ENCODE measurements at regions of chr10 and their contacts with region 1.

Region 1: GRCh38 chr10:69179743-69180524 is at the start of gene SUPV3L1:
- DNase-seq: peak; percentile 94 to 96
- ATAC-seq: peak; percentile 97 to 99
- H3K4me3 ChIP-seq: peak within 1 kb of the TSS; percentile 77 to 100 (median 95)
- H3K27ac ChIP-seq: peak within 1 kb of the TSS; percentile 87 to 98 (median 92)
- H3K4me1 ChIP-seq: peaks cover 27 to 33% of the 10 kb centered on the region in 2 donors
- H3K27me3 ChIP-seq: no peaks in the 10 kb centered on the region
- CTCF ChIP-seq: peak in 1 of 5 experiments; percentile 33
- POLR2A ChIP-seq: peak; percentile 86
- total RNA-seq, gene SUPV3L1: 29.7 to 38.8 (median 32.2) TPM

Region 2: GRCh38 chr10:68526626-68527307 is 653.2 kb before region 1 on chr10:
- in situ Hi-C with region 1: no loop called
- intact Hi-C with region 1: loop called (anchors 5 kb)
- DNase-seq: no peak
- ATAC-seq: peak; percentile 61 to 74
- H3K4me3 ChIP-seq: peak overlapping the region; percentile 83 to 100 (median 93)
- H3K27ac ChIP-seq: peak overlapping the region; percentile 88 to 100 (median 99)
- H3K4me1 ChIP-seq: peaks cover 4 to 8% of the 10 kb centered on the region in 2 donors
- H3K27me3 ChIP-seq: no peaks in the 10 kb centered on the region
- CTCF ChIP-seq: no peak
- POLR2A ChIP-seq: no peak

Region 3: DNA sequence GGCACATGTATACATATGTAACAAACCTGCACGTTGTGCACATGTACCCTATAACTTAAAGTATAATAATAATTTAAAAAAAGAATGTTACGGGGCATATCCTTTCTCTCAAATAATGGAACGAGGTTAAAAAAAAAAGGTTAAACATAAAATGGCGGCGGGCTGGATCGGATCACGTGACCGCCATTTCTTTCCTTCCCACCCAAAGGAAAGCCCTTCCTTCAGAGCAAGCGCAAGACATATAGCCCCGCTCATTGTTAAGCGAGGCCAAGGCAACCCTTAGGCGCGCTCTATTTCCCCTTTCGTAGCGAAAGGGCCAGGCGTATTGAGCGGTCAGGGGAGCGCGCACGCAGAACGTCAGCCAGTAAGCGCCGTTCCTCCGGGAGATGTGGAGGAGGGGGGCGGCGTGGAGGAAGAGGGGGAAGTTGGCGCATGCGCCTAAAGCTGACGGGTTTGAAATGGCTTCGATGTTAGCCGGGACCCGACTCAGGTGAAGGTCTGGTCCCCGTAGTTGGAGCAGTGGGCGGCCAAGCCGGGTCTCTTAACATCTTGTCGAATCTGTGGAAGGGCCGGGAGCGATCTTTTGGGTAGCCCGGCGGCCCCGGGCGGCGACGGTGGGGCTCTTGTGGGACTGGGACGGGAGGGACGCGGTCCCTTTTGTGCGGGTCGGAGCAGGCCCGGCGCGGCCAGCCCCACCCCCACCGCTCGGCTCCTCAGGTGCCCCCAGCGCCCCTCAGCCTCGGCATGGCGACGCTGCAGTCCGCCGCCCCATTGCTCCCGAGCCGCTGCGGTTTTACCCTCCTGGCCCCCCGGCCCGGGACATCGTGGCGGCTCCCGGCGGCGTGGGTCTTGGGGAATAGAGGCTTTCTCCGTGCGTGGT is 458.9 kb before region 1 on chr10 and contains the start of gene CCAR1:
- in situ Hi-C with region 1: no loop called
- intact Hi-C with region 1: loop called (anchors 1 kb)
- DNase-seq: peak; percentile 93 to 95
- ATAC-seq: peak; percentile 97 to 98
- H3K4me3 ChIP-seq: peak within 1 kb of the TSS; percentile 88 to 96 (median 90)
- H3K27ac ChIP-seq: peak within 1 kb of the TSS; percentile 94 to 99 (median 96)
- H3K4me1 ChIP-seq: peaks cover 7 to 9% of the 10 kb centered on the region in 2 donors
- H3K27me3 ChIP-seq: no peaks in the 10 kb centered on the region
- CTCF ChIP-seq: no peak
- POLR2A ChIP-seq: peak; percentile 67 to 73
- total RNA-seq, gene CCAR1: 17.8 to 71.3 (median 37.7) TPM

Region 4: GRCh38 chr10:68752711-68753350 is 427.1 kb before region 1 on chr10:
- in situ Hi-C with region 1: loop called in 1 of 4 experiments (anchors 25 kb)
- intact Hi-C with region 1: no loop called
- DNase-seq: no peak
- ATAC-seq: no peak
- H3K4me3 ChIP-seq: no peak overlapping the region
- H3K27ac ChIP-seq: no peak overlapping the region
- H3K4me1 ChIP-seq: no peaks in the 10 kb centered on the region
- H3K27me3 ChIP-seq: no peaks in the 10 kb centered on the region
- CTCF ChIP-seq: no peak
- POLR2A ChIP-seq: no peak

Region 5: GRCh38 chr10:68988530-68989316 is 191.2 kb before region 1 on chr10 and contains the start of gene KIFBP:
- in situ Hi-C with region 1: loop called in 1 of 4 experiments (anchors 10 kb)
- intact Hi-C with region 1: no loop called
- DNase-seq: peak; percentile 88 to 92
- ATAC-seq: peak; percentile 98
- H3K4me3 ChIP-seq: peak within 1 kb of the TSS; percentile 90 to 92 (median 90)
- H3K27ac ChIP-seq: peak within 1 kb of the TSS; percentile 78 to 87 (median 84)
- H3K4me1 ChIP-seq: peaks cover 35 to 45% of the 10 kb centered on the region in 2 donors
- H3K27me3 ChIP-seq: no peaks in the 10 kb centered on the region
- CTCF ChIP-seq: peak in 4 of 5 experiments; percentile 17 to 60 (median 44)
- POLR2A ChIP-seq: peak; percentile 57 to 73
- total RNA-seq, gene KIFBP: 24.0 to 41.3 (median 33.9) TPM

Region 6: DNA sequence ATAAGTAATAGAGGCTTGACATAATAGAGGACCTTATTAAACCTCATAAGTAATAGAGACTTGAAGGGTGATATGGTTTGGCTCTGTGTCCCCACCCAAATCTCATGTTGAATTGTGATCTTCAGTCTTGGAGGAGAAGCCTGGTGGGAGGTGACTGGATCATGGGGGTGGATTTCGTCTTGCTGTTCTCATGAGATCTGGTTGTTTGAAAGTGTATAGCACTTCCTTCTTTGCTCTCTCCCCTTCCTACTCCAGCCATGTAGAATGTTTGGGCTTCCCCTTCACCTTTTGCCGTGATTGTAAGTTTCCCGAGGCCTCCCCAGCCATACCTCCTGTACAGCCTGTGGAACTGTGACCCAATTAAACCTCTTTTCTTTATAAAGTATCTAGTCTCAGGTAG is 182.7 kb before region 1 on chr10:
- in situ Hi-C with region 1: no loop called
- intact Hi-C with region 1: loop called (anchors 5 kb)
- DNase-seq: no peak
- ATAC-seq: no peak
- H3K4me3 ChIP-seq: no peak overlapping the region
- H3K27ac ChIP-seq: peak overlapping the region; percentile 55 to 69 (median 64)
- H3K4me1 ChIP-seq: peaks cover 33 to 34% of the 10 kb centered on the region in 2 donors
- H3K27me3 ChIP-seq: no peaks in the 10 kb centered on the region
- CTCF ChIP-seq: no peak
- POLR2A ChIP-seq: no peak

Region 7: DNA sequence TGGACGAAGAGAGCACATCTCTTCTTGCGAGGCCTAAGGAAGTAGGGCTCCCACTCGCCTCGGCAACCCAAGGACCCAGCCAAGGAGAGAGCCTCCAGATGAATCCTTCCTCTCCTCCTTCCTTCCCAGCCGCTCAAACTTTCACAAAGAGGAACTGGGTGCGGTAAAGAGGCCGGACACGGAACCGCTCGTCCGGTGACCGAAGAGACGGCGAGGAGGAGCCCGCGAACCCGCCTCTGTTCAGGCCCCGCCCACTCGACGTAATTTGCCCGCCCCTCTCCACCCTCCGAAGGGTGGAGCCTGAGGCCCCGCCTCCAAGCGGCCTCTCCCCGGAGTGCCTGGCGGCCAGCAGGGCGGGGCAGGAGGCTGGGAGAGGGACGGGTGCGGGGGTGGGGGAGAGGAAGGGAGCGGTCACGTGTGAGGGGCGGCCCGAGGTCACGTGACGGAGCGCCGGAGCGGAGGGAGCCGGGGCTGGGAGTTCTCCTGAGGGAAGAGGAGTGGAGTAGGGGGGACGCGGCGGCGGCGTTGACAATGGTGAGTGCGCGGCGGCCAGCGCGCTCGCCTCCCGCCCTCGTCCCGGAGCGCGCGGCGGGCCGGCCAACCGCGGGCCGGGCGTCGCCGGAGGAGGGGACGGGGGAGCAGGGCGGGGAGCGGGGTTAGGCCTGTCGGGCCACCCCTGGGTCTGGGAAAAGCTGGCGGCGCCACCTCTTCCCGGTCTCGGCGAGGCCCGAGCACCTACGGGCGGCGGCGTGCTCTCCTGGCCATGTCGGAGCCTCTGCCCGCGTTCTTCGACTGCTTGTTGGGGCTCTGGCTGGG is 56.0 kb before region 1 on chr10 and contains the start of gene VPS26A:
- in situ Hi-C with region 1: loop called in 1 of 4 experiments (anchors 10 kb)
- intact Hi-C with region 1: loop called (anchors 1 kb)
- DNase-seq: peak; percentile 98 to 99
- ATAC-seq: peak; percentile 87 to 91
- H3K4me3 ChIP-seq: peak within 1 kb of the TSS; percentile 57 to 90 (median 85)
- H3K27ac ChIP-seq: peak within 1 kb of the TSS; percentile 91 to 97 (median 96)
- H3K4me1 ChIP-seq: peaks cover 18 to 20% of the 10 kb centered on the region in 2 donors
- H3K27me3 ChIP-seq: no peaks in the 10 kb centered on the region
- CTCF ChIP-seq: peak in 3 of 5 experiments; percentile 4 to 46 (median 27)
- POLR2A ChIP-seq: peak; percentile 95 to 96
- total RNA-seq, gene VPS26A: 21.0 to 31.1 (median 25.4) TPM

Measured in gastrocnemius medialis (tissue), 4 donors.